ENCODE measurements at regions of chr7 and their contacts with region 1.

Region 1: DNA sequence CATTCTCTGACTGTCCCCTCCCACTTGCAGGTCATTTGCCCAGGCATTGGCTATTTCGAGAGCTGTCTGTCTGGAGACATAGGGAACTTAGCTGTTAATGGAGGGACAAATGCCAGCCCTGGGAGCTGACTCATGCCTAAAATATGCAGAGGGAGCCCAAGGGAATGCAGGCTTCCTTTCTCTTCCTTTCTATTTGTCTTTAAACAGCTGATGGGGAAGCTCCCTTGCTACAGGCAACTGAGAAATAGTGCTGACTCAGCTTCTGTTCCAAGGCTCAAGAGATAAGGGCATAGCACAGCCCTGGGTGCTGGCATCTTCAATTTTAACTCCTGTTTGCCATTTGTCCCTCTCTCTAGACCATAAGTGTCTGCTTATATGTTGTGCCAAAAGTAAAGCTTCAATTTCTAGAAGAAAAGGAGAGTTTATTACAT is 82.7 kb upstream of the C1GALT1 start:
- DNase-seq: peak; percentile 90
- H3K4me3 ChIP-seq: no peak overlapping the region
- CTCF ChIP-seq: no peak

Region 2: DNA sequence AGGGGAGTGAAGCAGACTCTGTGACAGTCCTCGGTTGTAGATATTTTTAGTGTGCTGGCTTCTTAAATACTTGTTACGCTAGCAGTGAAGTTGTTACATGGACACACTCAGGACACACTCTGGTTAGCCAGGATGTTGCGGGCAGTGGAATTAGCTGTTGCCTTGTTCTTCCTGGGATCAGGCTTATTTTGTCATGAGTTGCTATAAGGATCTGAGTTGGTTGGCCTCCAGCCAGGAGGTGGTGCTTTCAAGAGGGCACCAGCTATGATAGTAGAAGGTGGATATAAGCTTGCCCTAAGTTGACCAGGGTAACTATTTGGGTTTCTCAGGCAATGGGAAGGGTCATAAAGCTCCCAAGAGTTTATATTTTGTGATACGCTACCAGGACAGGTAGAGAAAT is 67.4 kb before region 1 on chr7:
- in situ Hi-C with region 1: loop called (anchors 10 kb)
- DNase-seq: no peak
- H3K4me3 ChIP-seq: no peak overlapping the region
- CTCF ChIP-seq: no peak